Right cardiac atrium (tissue), 5 donors: ENCODE measurements at regions of chr7 and their contacts with region 1.

Region 1: DNA sequence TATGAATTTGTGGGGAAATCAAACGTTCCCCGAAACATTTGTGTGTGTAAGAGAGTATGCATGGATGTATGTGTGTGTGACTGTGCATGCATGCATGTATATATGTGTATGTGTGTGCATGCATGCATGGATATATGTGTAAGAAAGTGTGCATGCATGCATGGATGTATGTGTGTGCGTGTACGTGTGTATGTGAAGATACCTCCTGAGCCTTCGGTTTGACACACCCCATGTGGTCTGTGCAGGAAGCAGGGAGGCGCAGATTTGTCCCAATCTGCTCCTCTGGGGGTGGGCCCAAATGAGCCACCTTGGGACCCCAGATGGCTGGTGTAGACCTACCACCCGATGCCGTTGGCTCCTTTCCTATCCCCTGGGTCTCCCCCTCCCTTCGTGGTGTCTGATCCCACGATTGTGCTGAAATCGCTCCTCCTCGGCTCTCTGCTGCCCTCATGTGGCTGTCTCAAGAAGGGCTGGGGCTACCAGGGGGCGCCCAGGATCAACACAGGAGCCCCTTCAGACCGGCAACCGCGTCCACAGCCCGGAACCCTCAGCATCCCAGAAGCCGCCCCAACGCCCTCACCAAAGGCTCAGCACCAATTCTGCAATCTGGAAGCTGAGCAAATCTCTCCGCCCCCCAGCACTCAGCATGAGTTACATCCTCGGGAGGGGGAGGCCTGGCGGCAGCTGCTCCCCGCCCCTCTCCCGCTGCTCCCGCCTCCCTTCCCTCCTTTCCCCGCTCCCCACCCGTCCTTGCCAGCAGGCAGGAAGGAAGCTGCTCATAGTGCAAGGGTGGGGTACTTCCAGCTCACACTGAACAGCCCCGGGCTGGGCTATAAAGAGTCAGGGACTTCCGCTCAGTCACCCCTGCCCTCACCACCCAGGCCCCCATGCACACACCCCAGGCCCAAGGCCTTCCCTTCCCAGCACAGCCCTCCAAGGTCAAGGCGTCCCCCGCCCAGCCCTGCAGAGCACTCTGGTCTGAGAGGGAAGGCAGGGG is 2.3 kb upstream of the NOS3 start:
- DNase-seq: peak; percentile 85 to 90 (median 90)
- ATAC-seq: peak; percentile 70 to 75
- H3K4me3 ChIP-seq: no peak overlapping the region
- H3K27ac ChIP-seq: peak overlapping the region; percentile 6
- H3K4me1 ChIP-seq: no peaks in the 10 kb centered on the region
- H3K27me3 ChIP-seq: no peaks in the 10 kb centered on the region

Region 2: GRCh38 chr7:150778738-150779301 is 209.7 kb before region 1 on chr7:
- intact Hi-C with region 1: loop called (anchors 5 to 10 kb)
- DNase-seq: peak; percentile 88 to 95 (median 91)
- ATAC-seq: peak; percentile 92 to 93
- H3K4me3 ChIP-seq: no peak overlapping the region
- H3K27ac ChIP-seq: no peak overlapping the region
- H3K4me1 ChIP-seq: no peaks in the 10 kb centered on the region
- H3K27me3 ChIP-seq: no peaks in the 10 kb centered on the region

Region 3: GRCh38 chr7:150898475-150899011 is 90.0 kb before region 1 on chr7:
- intact Hi-C with region 1: loop called (anchors 1 to 5 kb)
- DNase-seq: peak; percentile 79 to 92 (median 92)
- ATAC-seq: peak; percentile 70 to 74
- H3K4me3 ChIP-seq: no peak overlapping the region
- H3K27ac ChIP-seq: no peak overlapping the region
- H3K4me1 ChIP-seq: no peaks in the 10 kb centered on the region
- H3K27me3 ChIP-seq: no peaks in the 10 kb centered on the region

Region 4: DNA sequence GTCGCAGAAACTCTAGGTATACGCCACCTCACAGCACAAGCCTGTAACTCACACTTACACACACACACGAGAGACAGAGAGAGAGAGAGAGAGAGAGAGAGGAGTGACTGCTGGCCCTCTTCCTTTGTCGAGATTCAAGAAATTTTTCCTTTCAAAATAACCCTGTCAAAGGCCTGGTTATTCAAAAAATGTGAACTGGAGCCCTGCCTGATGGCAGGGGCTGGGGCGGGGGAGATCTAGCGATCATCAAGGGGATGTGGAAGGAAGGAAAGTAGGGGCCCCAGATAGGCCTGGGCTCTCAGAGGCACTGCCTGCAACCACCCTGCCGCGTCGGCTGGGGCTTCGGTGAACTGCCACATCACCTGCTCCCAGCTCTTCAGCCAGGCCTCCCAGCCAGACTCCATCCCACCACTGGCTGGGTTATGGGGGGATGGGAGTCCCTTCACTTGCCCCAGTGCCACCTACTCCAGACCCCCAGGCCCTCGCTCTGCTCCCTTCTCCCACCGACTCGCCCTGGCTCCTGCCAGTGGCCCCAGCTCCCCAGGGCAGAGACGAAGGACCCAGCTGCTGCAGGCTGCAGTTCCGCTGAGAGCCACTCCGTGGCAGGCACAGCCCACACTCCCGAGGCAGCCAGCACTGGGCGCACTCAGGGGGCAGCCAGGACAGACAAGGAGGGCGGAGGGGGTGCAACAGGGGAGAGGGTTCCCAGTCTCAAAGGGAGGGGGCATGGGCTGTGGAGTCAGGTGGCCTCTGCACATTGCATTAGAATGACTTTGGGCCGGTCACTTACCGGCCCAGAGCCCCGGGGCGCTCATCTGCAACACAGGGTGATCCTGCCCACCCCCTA is 25.8 kb before region 1 on chr7:
- intact Hi-C with region 1: loop called in 1 of 4 experiments (anchors 2 kb)
- DNase-seq: peak; percentile 62 to 88 (median 78)
- ATAC-seq: peak; percentile 54 to 65
- H3K4me3 ChIP-seq: no peak overlapping the region
- H3K27ac ChIP-seq: peak overlapping the region; percentile 87
- H3K4me1 ChIP-seq: peaks cover 14% of the 10 kb centered on the region
- H3K27me3 ChIP-seq: no peaks in the 10 kb centered on the region